Naive thymus-derived CD4-positive, alpha-beta T cell (primary cell): ENCODE measurements at regions of chr6 and their contacts with region 1.

Region 1: DNA sequence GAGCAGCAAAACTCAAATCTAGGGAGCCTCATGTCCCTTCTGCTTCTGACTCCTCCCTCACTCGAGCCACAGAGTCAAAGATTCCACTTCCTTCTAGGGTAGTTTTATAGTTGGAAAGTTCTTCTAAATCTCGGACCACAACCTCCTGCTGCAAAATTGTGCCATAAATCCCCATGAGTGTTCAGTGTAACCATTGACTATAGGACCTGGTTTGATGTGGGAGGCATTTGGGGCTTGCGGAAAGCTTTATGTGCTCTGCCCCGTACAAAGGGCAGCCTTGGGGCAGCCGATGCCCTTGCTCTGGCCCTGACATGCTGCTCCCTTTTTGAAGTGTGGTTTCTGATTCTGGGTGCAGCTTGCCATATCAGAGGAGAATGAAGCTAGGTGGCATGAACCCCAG is 43.6 kb upstream of the IER3 start:
- DNase-seq: peak in 1 of 9 donors; percentile 57
- ATAC-seq: no peak
- H3K4me3 ChIP-seq: no peak overlapping the region
- H3K4me3 Mint-ChIP-seq: peak overlapping the region in 6 of 10 donors; percentile 33 to 73 (median 54)
- H3K27ac ChIP-seq: no peak overlapping the region
- H3K27ac Mint-ChIP-seq: peak overlapping the region in 5 of 9 donors; percentile 21 to 88 (median 56)
- H3K4me1 ChIP-seq: peaks cover 4 to 22% of the 10 kb centered on the region in 2 donors
- H3K4me1 Mint-ChIP-seq: peaks cover 24 to 65% (median 56%) of the 10 kb centered on the region in 7 donors
- H3K27me3 ChIP-seq: no peaks in the 10 kb centered on the region
- H3K27me3 Mint-ChIP-seq: no peaks in the 10 kb centered on the region

Region 2: DNA sequence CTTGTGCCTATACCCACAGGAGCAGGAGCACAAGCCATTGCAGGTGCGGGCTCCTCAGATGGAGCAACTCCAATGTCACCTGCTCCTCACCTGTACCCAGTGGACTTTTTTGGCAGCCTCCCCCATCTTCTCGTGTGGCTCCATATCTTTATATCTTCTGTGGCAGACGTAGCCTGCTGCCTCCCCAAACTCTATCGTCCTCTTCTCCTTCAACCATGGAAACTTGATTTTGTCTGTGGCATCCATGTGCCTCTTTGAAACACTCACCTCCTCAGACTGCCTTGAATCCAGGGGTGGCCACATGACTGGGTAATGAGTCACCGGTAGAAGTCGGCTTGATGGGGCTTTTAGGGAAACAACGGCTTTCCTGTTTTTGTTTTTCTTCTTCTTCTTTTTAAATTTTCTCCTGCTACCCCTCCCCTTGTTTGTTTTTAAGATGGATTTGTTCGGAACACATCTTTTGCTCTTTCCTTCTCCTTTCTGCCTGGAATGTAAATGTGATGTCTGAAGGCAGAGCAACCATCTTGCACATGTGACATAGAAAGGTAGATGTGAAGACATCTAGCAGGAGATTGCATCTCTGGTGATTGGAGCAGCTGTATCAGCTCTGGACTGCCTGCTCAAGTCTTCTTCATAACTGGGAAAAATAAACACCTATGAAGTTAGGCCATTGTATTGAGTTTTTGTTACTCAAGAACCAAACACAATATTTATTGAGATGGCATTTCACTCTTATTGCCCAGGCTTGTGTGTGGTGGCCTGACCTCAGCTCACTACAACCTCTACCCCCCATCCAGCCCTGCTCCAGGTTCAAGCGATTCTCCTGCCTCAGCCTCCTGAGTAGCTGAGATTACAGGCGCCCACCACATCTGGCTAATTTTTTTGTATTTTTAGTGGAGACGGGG is 26.4 kb after region 1 on chr6:
- CTCF ChIA-PET with region 1: no interaction called
- POLR2A ChIA-PET with region 1: interaction called, 31 read pairs
- intact Hi-C with region 1: loop called (anchors 2 kb)
- DNase-seq: peak in 2 of 9 donors; percentile 38 to 63
- ATAC-seq: peak; percentile 80
- H3K4me3 ChIP-seq: no peak overlapping the region
- H3K4me3 Mint-ChIP-seq: peak overlapping the region in 9 of 10 donors; percentile 12 to 70 (median 39)
- H3K27ac ChIP-seq: no peak overlapping the region
- H3K27ac Mint-ChIP-seq: peak overlapping the region; percentile 49 to 95 (median 83)
- H3K4me1 ChIP-seq: peaks cover 18 to 40% of the 10 kb centered on the region in 2 donors
- H3K4me1 Mint-ChIP-seq: peaks cover 39 to 85% (median 78%) of the 10 kb centered on the region in 7 donors
- H3K27me3 ChIP-seq: no peaks in the 10 kb centered on the region
- H3K27me3 Mint-ChIP-seq: no peaks in the 10 kb centered on the region